ENCODE measurements at regions of chr15 and their contacts with region 1.

Region 1: DNA sequence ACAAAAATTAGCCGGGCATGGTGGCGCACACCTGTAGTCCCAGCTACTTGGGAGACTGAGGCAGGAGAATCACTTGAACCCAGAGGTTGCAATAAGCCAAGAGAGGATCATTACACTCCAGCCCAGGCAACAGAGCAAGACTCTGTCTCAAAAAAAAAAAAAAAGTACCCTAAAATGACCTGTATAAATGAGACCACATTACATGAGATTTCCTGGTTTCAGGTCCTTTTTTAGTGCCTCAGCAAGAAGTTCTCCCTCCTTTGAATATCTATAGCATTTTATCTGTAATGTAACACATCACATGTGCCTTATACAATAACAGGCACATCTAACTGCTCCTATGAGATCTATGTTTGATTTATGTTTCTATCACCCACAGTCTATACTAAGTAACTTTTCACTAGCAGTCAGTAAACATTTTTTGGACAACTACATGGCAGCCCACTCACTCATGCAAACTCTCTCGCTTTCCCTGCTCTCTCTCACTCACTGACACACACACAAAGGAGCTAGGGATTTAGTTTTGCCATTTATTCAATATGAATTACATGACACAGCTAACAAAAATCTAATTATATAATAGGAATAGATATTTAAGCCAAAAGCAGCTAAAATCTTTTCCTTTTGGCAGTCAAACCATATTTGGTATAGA is 34.1 kb downstream of the ADAM10 start:
- DNase-seq: no peak
- H3K4me3 ChIP-seq: no peak overlapping the region
- H3K27ac ChIP-seq: no peak overlapping the region
- H3K4me1 ChIP-seq: no peaks in the 10 kb centered on the region
- H3K27me3 ChIP-seq: no peaks in the 10 kb centered on the region
- CTCF ChIP-seq: no peak

Region 2: DNA sequence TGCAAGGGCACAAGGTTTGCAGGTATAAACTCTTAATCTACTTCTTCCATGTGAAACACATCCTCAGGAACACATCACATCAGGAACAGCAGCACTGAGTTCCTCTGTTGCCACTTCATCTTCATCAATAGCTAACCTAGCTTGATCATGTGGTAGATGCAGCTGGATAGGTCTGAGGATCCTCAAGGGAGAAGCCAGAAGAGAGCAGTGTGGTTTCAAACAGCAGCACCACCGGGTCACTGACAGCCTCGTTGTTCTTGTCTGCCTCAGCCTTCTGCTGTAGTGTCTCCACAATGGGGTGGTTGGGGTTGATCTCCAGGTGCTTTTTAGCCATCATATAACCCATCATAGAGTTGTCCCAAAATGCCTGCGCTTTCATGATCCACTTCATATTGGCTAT is 24.7 kb before region 1 on chr15:
- CTCF ChIA-PET with region 1: no interaction called
- POLR2A ChIA-PET with region 1: interaction called, 12 read pairs
- intact Hi-C with region 1: no loop called
- DNase-seq: no peak
- H3K4me3 ChIP-seq: no peak overlapping the region
- H3K27ac ChIP-seq: no peak overlapping the region
- H3K4me1 ChIP-seq: no peaks in the 10 kb centered on the region
- H3K27me3 ChIP-seq: no peaks in the 10 kb centered on the region
- CTCF ChIP-seq: no peak